CD4-positive, alpha-beta T cell (primary cell): ENCODE measurements at regions of chr11 and their contacts with region 1.

Region 1: DNA sequence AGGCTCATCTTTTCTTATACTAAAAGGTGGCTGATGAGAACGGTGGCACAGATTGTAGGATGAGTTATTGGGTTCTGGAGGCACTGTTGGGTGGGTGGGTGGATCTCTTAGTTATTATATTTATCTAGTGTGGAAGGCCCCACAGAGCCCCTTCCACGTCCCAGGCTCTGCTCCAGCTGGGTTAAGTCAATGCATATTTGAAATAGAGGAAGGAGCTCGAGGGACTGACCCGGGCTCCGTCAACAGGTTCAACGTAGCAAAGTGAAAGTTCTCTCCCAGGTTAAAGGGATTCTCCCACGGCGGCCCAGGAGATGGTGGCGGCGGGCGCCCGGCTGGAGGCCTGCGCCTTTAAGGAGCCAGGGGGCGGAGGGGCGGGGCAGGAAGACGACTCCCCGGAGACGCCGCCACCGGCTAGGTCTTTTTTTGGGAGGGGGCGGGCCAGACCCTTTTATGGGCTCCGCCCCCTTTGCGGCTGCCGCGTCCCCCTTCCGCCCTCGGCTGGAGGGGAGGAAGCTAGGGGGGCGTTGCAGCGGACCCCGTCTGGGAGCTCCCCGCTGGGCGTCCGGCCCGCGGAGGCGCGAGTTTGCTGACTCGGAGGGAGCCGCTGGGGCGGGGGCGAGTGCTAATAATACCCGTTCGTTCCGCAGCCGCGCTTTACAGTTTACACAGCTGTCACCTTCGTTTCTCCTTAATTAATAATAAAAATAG is 1.5 kb upstream of the INPPL1 start:
- DNase-seq: peak; percentile 83 to 97 (median 94)
- ATAC-seq: peak; percentile 76
- H3K4me3 ChIP-seq: peak overlapping the region; percentile 91
- H3K4me3 Mint-ChIP-seq: peak overlapping the region; percentile 98
- H3K27ac ChIP-seq: peak overlapping the region; percentile 71 to 75
- H3K27ac Mint-ChIP-seq: peak overlapping the region; percentile 95
- H3K4me1 ChIP-seq: peaks cover 35% of the 10 kb centered on the region
- H3K4me1 Mint-ChIP-seq: peaks cover 32% of the 10 kb centered on the region
- H3K27me3 ChIP-seq: no peaks in the 10 kb centered on the region
- H3K27me3 Mint-ChIP-seq: no peaks in the 10 kb centered on the region
- CTCF ChIP-seq: peak; percentile 22

Region 2: GRCh38 chr11:71448257-71449171 is 774.5 kb before region 1 on chr11 and contains the start of gene DHCR7:
- CTCF ChIA-PET with region 1: no interaction called
- POLR2A ChIA-PET with region 1: no interaction called
- intact Hi-C with region 1: loop called in 1 of 2 experiments (anchors 10 kb)
- DNase-seq: peak; percentile 77 to 96 (median 88)
- ATAC-seq: peak; percentile 73
- H3K4me3 ChIP-seq: peak within 1 kb of the TSS; percentile 99
- H3K4me3 Mint-ChIP-seq: peak within 1 kb of the TSS; percentile 90
- H3K27ac ChIP-seq: peak within 1 kb of the TSS; percentile 69 to 78
- H3K27ac Mint-ChIP-seq: peak within 1 kb of the TSS; percentile 95
- H3K4me1 ChIP-seq: peaks cover 44% of the 10 kb centered on the region
- H3K4me1 Mint-ChIP-seq: peaks cover 55% of the 10 kb centered on the region
- H3K27me3 ChIP-seq: no peaks in the 10 kb centered on the region
- H3K27me3 Mint-ChIP-seq: no peaks in the 10 kb centered on the region
- CTCF ChIP-seq: no peak
- total RNA-seq, gene DHCR7: 30.2 to 30.6 TPM

Region 3: GRCh38 chr11:71928737-71929452 is 294.2 kb before region 1 on chr11 and contains the start of gene RNF121:
- CTCF ChIA-PET with region 1: no interaction called
- POLR2A ChIA-PET with region 1: interaction called, 29 read pairs
- intact Hi-C with region 1: loop called in 1 of 2 experiments (anchors 1 kb)
- DNase-seq: peak; percentile 93 to 98 (median 97)
- ATAC-seq: peak; percentile 86
- H3K4me3 ChIP-seq: peak within 1 kb of the TSS; percentile 79
- H3K4me3 Mint-ChIP-seq: peak within 1 kb of the TSS; percentile 96
- H3K27ac ChIP-seq: peak within 1 kb of the TSS; percentile 92 to 95
- H3K27ac Mint-ChIP-seq: peak within 1 kb of the TSS; percentile 93
- H3K4me1 ChIP-seq: peaks cover 32% of the 10 kb centered on the region
- H3K4me1 Mint-ChIP-seq: peaks cover 57% of the 10 kb centered on the region
- H3K27me3 ChIP-seq: no peaks in the 10 kb centered on the region
- H3K27me3 Mint-ChIP-seq: no peaks in the 10 kb centered on the region
- CTCF ChIP-seq: no peak
- total RNA-seq, gene RNF121: 10.1 to 10.4 TPM

Region 4: DNA sequence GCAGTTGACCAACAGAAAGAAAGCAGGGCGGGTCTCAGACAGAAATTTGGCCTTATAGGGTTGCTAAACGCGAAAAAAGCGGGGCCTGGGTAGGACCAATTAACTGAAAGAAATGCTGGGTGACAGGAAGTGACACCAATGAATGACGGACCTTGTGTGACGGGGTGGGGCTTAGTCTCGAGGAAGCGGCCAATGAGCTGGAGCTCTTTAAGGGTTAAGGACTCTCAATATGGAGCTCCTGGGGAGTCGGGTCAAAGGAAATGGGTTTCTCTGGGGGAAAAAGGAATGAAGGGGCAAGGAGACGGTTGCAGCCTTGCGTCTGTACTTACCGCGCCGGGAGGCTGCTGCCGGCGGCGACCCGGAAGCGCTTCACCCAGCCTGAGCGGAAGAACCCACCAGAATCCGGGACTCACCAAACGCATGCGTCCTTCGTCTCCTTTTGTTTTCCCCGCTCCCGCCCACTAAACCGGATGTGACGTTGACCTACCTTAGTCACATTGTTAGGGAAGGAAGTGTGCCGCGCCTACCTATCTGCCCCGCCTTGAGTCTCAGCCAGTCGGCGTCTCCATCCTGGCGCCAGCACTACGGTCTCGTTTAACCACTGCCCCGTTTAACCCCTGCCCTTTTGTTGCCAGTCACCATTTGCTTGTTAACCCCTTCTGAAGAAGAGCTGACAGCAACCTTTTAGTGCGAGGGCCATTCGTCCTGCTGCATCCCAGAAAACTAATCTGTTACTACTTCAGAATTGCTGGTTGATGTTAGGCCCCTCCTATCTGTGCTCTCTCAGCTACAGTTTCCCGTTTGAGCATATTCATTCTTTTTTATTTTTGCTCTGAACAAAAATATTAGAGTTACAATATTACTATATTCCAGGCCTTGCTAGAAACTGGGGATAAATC is 110.5 kb before region 1 on chr11 and contains the start of gene ANAPC15:
- CTCF ChIA-PET with region 1: no interaction called
- POLR2A ChIA-PET with region 1: interaction called, 4 read pairs
- intact Hi-C with region 1: loop called (anchors 2 to 10 kb)
- DNase-seq: peak; percentile 93 to 99 (median 97)
- ATAC-seq: peak; percentile 84
- H3K4me3 ChIP-seq: peak within 1 kb of the TSS; percentile 68
- H3K4me3 Mint-ChIP-seq: peak within 1 kb of the TSS; percentile 93
- H3K27ac ChIP-seq: peak within 1 kb of the TSS; percentile 97 to 98
- H3K27ac Mint-ChIP-seq: peak within 1 kb of the TSS; percentile 98
- H3K4me1 ChIP-seq: peaks cover 17% of the 10 kb centered on the region
- H3K4me1 Mint-ChIP-seq: peaks cover 19% of the 10 kb centered on the region
- H3K27me3 ChIP-seq: no peaks in the 10 kb centered on the region
- H3K27me3 Mint-ChIP-seq: no peaks in the 10 kb centered on the region
- CTCF ChIP-seq: no peak
- total RNA-seq, gene ANAPC15: 48.8 to 52.5 TPM

Region 5: DNA sequence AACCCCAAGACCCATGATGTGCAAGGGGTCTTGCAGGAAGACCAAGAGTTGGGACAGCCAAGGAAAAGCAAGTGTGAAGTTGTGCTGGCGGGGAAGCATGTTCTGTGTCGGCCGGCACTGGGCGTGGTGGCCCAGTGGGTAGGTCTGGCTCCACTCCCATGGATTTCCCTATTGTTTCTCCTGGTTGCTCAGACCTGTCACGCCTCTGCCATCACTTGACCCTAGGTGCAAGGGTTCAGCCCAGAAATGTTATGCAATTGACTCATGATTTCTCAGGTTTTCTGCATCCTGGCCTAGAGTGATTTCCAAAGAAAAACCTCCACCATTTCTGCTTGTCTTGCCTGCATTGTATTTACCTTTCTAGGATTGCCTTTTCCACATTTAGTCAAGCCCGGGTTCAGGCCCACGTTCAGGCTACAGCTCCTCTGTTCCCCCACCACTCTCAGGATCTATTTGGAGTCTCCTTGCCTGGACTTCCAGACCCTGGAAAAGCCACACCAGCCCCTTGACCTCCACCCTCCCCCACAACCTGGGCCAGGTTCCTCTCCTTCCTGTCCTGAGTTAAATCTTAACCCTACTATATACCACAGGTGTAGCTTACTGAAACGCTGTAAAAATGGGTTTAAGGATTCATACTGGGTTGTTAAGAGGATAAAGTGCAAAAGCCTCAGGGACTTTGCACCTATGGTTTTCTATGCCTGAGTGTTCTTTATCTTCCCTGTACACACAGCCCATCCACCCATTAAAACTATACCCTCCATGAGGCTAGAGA is 48.6 kb before region 1 on chr11:
- CTCF ChIA-PET with region 1: no interaction called
- POLR2A ChIA-PET with region 1: no interaction called
- intact Hi-C with region 1: no loop called
- DNase-seq: no peak
- ATAC-seq: no peak
- H3K4me3 ChIP-seq: no peak overlapping the region
- H3K4me3 Mint-ChIP-seq: no peak overlapping the region
- H3K27ac ChIP-seq: no peak overlapping the region
- H3K27ac Mint-ChIP-seq: no peak overlapping the region
- H3K4me1 ChIP-seq: no peaks in the 10 kb centered on the region
- H3K4me1 Mint-ChIP-seq: no peaks in the 10 kb centered on the region
- H3K27me3 ChIP-seq: no peaks in the 10 kb centered on the region
- H3K27me3 Mint-ChIP-seq: peaks cover 3% of the 10 kb centered on the region
- CTCF ChIP-seq: no peak

Region 6: DNA sequence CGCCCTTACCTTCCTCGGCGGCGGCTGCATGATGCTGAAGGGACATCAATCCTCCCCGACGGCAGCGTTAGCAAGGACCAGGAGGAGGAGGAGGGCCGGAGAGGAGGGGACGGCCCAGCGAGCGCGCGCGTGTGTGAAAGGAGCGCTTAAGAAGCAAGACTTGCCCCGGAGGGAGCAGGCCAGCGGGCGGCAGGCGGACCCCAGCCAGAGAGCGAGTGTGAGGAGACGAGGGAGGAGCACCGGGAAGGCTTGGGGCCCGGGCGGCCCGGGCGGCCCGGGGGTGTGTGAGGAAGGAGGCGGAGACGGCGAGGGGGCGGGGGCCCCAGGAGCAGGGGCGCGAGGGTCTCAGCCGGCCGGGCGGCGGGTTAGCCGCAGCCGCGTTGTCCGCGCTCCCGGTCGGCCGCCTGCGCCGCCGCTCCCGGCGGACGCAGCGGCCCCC is 918.8 kb after region 1 on chr11:
- CTCF ChIA-PET with region 1: no interaction called
- POLR2A ChIA-PET with region 1: no interaction called
- intact Hi-C with region 1: loop called in 1 of 2 experiments (anchors 5 kb)
- DNase-seq: peak in 9 of 14 experiments; percentile 35 to 83 (median 57)
- ATAC-seq: peak; percentile 29
- H3K4me3 ChIP-seq: peak overlapping the region; percentile 98
- H3K4me3 Mint-ChIP-seq: peak overlapping the region; percentile 99
- H3K27ac ChIP-seq: peak overlapping the region; percentile 76 to 98
- H3K27ac Mint-ChIP-seq: peak overlapping the region; percentile 96
- H3K4me1 ChIP-seq: peaks cover 26% of the 10 kb centered on the region
- H3K4me1 Mint-ChIP-seq: peaks cover 47% of the 10 kb centered on the region
- H3K27me3 ChIP-seq: no peaks in the 10 kb centered on the region
- H3K27me3 Mint-ChIP-seq: no peaks in the 10 kb centered on the region
- CTCF ChIP-seq: no peak